ENCODE measurements at regions of chr1 and their contacts with region 1.

Region 1: GRCh38 chr1:64823691-64824476 is 79.0 kb downstream of the RAVER2 start:
- DNase-seq: peak; percentile 29 to 63 (median 63)
- H3K4me3 ChIP-seq: no peak overlapping the region
- H3K4me3 Mint-ChIP-seq: peak overlapping the region in 1 of 2 donors; percentile 69
- H3K27ac ChIP-seq: no peak overlapping the region
- H3K27ac Mint-ChIP-seq: no peak overlapping the region
- H3K4me1 ChIP-seq: peaks cover 3% of the 10 kb centered on the region in 2 donors
- H3K4me1 Mint-ChIP-seq: peaks cover 4% of the 10 kb centered on the region
- H3K27me3 ChIP-seq: no peaks in the 10 kb centered on the region
- H3K27me3 Mint-ChIP-seq: no peaks in the 10 kb centered on the region
- CTCF ChIP-seq: peak; percentile 82

Region 2: GRCh38 chr1:64268653-64269557 is 555.0 kb before region 1 on chr1:
- intact Hi-C with region 1: loop called (anchors 2 to 5 kb)
- DNase-seq: peak; percentile 40 to 70 (median 67)
- H3K4me3 ChIP-seq: no peak overlapping the region
- H3K4me3 Mint-ChIP-seq: no peak overlapping the region
- H3K27ac ChIP-seq: no peak overlapping the region
- H3K27ac Mint-ChIP-seq: no peak overlapping the region
- H3K4me1 ChIP-seq: no peaks in the 10 kb centered on the region
- H3K4me1 Mint-ChIP-seq: peaks cover 2% of the 10 kb centered on the region
- H3K27me3 ChIP-seq: no peaks in the 10 kb centered on the region
- H3K27me3 Mint-ChIP-seq: peaks cover 0 to 7% (median under 1%) of the 10 kb centered on the region in 3 donors
- CTCF ChIP-seq: peak; percentile 89

Region 3: GRCh38 chr1:64877151-64877550 is 53.3 kb after region 1 on chr1:
- intact Hi-C with region 1: no loop called
- DNase-seq: no peak
- H3K4me3 ChIP-seq: no peak overlapping the region
- H3K4me3 Mint-ChIP-seq: no peak overlapping the region
- H3K27ac ChIP-seq: no peak overlapping the region
- H3K27ac Mint-ChIP-seq: peak overlapping the region in 2 of 7 donors; percentile 32 to 65
- H3K4me1 ChIP-seq: no peaks in the 10 kb centered on the region
- H3K4me1 Mint-ChIP-seq: no peaks in the 10 kb centered on the region
- H3K27me3 ChIP-seq: no peaks in the 10 kb centered on the region
- H3K27me3 Mint-ChIP-seq: peaks cover 0 to 2% (median 0%) of the 10 kb centered on the region in 3 donors
- CTCF ChIP-seq: no peak